Activated CD8-positive, alpha-beta T cell treated with anti-CD3 and anti-CD28 coated beads for 36 hours (primary cell): ENCODE measurements at regions of chr20 and their contacts with region 1.

Region 1: GRCh38 chr20:62926239-62927104 is at the start of gene DIDO1:
- DNase-seq: peak; percentile 89
- ATAC-seq: peak; percentile 75
- H3K4me3 Mint-ChIP-seq: peak within 1 kb of the TSS; percentile 97
- H3K27ac Mint-ChIP-seq: peak within 1 kb of the TSS; percentile 95
- H3K4me1 Mint-ChIP-seq: peaks cover 64% of the 10 kb centered on the region
- H3K27me3 Mint-ChIP-seq: no peaks in the 10 kb centered on the region
- CTCF ChIP-seq: peak; percentile 46
- total RNA-seq, gene DIDO1: 45.9 to 47.4 TPM

Region 2: DNA sequence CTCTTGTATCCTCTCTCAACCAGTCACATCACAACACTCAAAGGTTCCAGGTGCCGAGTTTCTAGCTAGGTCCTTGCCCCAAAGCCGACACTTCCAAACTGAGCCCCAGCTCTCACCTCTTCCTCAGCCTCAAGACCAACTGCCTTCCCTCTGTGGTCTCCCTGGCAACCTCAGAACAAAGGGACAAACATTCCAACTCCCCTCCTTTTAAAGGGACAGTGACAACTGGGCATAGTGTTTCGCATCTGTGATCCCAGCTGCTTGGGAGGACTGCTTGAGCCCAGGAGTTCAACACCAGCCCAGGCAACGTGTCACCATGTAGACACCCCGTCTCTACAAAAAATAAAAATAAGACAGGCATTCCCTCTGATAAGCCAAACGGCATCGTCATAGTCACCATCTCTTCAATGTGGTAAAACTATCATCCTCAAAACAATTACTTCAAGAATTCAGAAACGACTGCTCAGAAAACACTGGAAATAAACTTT is 11.5 kb before region 1 on chr20:
- CTCF ChIA-PET with region 1: interaction called, 7 read pairs
- POLR2A ChIA-PET with region 1: interaction called, 50 read pairs
- intact Hi-C with region 1: no loop called
- DNase-seq: peak; percentile 48
- ATAC-seq: no peak
- H3K4me3 Mint-ChIP-seq: peak overlapping the region; percentile 9
- H3K27ac Mint-ChIP-seq: peak overlapping the region; percentile 90
- H3K4me1 Mint-ChIP-seq: peaks cover 71% of the 10 kb centered on the region
- H3K27me3 Mint-ChIP-seq: no peaks in the 10 kb centered on the region
- CTCF ChIP-seq: no peak

Region 3: DNA sequence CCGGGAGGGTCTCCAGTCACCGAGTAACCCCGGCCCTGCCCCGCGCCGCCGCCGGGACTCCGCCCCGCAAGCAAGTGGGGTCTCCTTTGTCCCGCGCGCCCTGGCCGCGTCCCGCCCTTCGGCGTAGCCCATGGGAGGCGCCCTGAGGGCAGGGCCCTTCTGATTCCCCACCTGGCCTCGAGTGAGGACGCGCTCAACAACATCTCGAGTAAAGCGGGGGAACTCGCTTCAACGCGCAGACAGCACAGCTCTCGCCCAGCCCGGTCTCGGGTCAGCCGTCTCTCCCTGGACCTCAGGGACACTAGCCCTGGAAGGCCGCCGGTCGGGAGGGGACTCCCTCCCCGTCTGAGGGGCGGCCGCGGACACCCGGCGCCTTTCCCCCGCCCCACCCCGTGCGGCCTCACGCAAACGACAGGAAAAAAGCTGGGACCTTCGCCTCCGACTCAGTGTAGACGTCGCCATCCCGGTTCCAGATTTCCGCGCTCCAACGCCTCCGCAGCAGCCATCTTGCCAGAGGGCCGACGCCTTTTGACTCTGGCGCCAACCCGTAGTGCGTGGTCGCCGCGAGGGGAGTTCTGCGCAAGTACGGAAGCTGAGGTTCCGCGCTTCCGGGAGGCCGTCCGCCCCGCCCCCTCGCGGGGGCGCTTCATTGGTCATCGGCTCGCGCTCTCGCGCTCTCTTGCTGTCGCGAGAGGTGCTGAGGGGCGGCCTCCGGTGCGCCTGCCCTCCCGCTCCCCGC is 11.1 kb after region 1 on chr20:
- CTCF ChIA-PET with region 1: interaction called, 47 read pairs
- POLR2A ChIA-PET with region 1: interaction called, 243 read pairs
- intact Hi-C with region 1: no loop called
- DNase-seq: peak; percentile 98
- ATAC-seq: peak; percentile 93
- H3K4me3 Mint-ChIP-seq: no peak overlapping the region
- H3K27ac Mint-ChIP-seq: peak overlapping the region; percentile 98
- H3K4me1 Mint-ChIP-seq: peaks cover 31% of the 10 kb centered on the region
- H3K27me3 Mint-ChIP-seq: no peaks in the 10 kb centered on the region
- CTCF ChIP-seq: no peak